Gastrocnemius medialis (tissue), 4 donors: ENCODE measurements at regions of chr10 and their contacts with region 1.

Region 1: DNA sequence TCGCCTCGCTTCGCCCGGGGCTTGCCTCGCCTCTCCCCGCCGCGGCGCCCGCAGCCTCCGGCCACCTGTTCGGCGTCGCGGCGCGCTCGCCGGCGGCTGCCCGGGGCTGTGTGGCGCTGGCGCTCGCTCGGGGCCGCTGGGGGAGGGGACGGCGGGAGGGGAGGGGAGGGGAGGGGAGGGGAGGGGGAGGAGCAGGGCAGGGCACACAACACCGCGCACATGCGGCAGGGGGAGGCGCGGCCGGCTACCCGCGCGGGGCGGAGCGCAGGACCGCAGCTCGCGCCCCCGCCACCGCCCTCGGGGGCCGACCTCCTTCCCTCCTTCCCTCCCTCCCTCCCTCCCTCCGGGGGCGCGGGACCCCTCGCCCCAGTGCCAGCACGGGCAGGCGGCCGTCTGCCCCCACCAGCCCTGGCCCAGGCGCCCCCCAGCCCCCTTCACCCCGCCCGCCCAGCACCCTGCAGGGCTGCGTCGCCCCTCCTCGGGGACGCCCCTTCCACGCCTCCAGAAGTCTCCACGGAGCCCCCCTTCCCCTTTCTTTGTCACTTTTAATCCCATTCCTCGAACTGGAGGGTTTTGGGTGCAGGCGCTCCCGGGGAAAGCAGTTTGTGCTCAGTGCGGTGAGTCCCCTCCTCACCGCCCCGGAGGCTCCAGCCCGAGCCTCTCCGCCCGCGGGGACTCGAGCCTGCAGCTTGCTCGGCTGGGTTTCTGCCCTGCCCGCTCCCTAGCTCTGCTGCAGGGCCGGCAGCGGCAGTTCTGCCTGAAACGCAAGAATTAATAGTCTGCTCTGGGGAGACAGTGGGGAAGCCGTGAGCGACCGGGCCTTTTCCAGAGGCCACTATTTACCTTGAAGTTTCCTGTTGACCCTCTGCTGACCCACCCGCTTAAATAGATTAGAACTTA is at the start of gene PARD3:
- DNase-seq: peak; percentile 67 to 69
- ATAC-seq: peak; percentile 64 to 71
- H3K4me3 ChIP-seq: peak within 1 kb of the TSS; percentile 76 to 91 (median 86)
- H3K27ac ChIP-seq: peak within 1 kb of the TSS; percentile 79 to 92 (median 88)
- H3K4me1 ChIP-seq: peaks cover 29 to 35% of the 10 kb centered on the region in 2 donors
- H3K27me3 ChIP-seq: no peaks in the 10 kb centered on the region
- CTCF ChIP-seq: no peak
- POLR2A ChIP-seq: peak; percentile 63 to 68
- total RNA-seq, gene PARD3: 64.6 to 75.8 (median 68.3) TPM

Region 2: DNA sequence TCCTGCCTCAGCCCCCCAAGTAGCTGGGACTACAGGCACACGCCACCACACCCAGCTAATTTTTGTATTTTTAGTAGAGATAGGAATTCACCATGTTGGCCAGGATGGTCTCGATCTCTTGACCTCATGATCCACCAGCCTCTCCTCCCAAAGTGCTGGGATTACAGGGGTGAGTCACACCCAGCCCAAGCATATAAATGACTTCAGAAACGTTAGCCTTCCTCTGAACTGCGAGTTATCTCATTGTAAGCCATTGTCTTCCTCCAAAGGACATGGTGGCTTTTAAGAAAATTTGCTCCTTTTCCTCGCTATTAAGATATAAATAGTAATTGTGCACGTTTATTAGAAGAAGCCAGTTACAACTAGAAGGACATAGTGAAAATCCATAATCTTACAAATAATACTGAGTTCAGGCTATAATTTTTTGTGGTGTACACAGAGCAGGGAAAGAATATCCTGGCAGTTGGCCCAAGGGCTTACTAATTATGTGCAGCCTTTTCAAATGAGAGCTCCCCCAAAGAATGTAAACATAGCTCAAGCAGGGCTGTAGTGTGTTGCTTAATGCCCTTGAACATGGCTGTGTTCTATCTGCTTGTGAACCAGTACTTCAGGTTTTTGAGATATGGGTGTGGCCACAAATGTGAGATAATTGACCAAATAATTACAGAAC is 496.1 kb before region 1 on chr10:
- in situ Hi-C with region 1: no loop called
- intact Hi-C with region 1: no loop called
- DNase-seq: no peak
- ATAC-seq: no peak
- H3K4me3 ChIP-seq: no peak overlapping the region
- H3K27ac ChIP-seq: no peak overlapping the region
- H3K4me1 ChIP-seq: peaks cover 11 to 13% of the 10 kb centered on the region in 2 donors
- H3K27me3 ChIP-seq: no peaks in the 10 kb centered on the region
- CTCF ChIP-seq: no peak
- POLR2A ChIP-seq: no peak

Region 3: GRCh38 chr10:34666008-34666705 is 149.3 kb before region 1 on chr10:
- in situ Hi-C with region 1: loop called in 2 of 4 experiments (anchors 25 kb)
- intact Hi-C with region 1: loop called (anchors 5 kb)
- DNase-seq: peak; percentile 39 to 59
- ATAC-seq: peak; percentile 86 to 95
- H3K4me3 ChIP-seq: no peak overlapping the region
- H3K27ac ChIP-seq: no peak overlapping the region
- H3K4me1 ChIP-seq: peaks cover 8 to 15% of the 10 kb centered on the region in 2 donors
- H3K27me3 ChIP-seq: no peaks in the 10 kb centered on the region
- CTCF ChIP-seq: peak; percentile 25 to 68 (median 45)
- POLR2A ChIP-seq: no peak

Region 4: GRCh38 chr10:34739915-34740314 is 75.5 kb before region 1 on chr10:
- in situ Hi-C with region 1: no loop called
- intact Hi-C with region 1: loop called (anchors 1 kb)
- DNase-seq: peak; percentile 79 to 86
- ATAC-seq: peak; percentile 87 to 95
- H3K4me3 ChIP-seq: peak overlapping the region; percentile 1 to 34 (median 22)
- H3K27ac ChIP-seq: peak overlapping the region; percentile 71 to 88 (median 75)
- H3K4me1 ChIP-seq: peaks cover 42 to 67% of the 10 kb centered on the region in 2 donors
- H3K27me3 ChIP-seq: no peaks in the 10 kb centered on the region
- CTCF ChIP-seq: no peak
- POLR2A ChIP-seq: peak in 1 of 2 donors; percentile 62

Region 5: GRCh38 chr10:34753014-34753757 is 62.2 kb before region 1 on chr10:
- in situ Hi-C with region 1: no loop called
- intact Hi-C with region 1: no loop called
- DNase-seq: no peak
- ATAC-seq: no peak
- H3K4me3 ChIP-seq: no peak overlapping the region
- H3K27ac ChIP-seq: peak overlapping the region in 1 of 4 donors; percentile 7
- H3K4me1 ChIP-seq: peaks cover 34 to 39% of the 10 kb centered on the region in 2 donors
- H3K27me3 ChIP-seq: no peaks in the 10 kb centered on the region
- CTCF ChIP-seq: no peak
- POLR2A ChIP-seq: no peak

Region 6: GRCh38 chr10:34773636-34774630 is 41.5 kb before region 1 on chr10:
- in situ Hi-C with region 1: no loop called
- intact Hi-C with region 1: loop called (anchors 5 kb)
- DNase-seq: no peak
- ATAC-seq: no peak
- H3K4me3 ChIP-seq: no peak overlapping the region
- H3K27ac ChIP-seq: no peak overlapping the region
- H3K4me1 ChIP-seq: peaks cover 56 to 62% of the 10 kb centered on the region in 2 donors
- H3K27me3 ChIP-seq: no peaks in the 10 kb centered on the region
- CTCF ChIP-seq: no peak
- POLR2A ChIP-seq: no peak

Region 7: DNA sequence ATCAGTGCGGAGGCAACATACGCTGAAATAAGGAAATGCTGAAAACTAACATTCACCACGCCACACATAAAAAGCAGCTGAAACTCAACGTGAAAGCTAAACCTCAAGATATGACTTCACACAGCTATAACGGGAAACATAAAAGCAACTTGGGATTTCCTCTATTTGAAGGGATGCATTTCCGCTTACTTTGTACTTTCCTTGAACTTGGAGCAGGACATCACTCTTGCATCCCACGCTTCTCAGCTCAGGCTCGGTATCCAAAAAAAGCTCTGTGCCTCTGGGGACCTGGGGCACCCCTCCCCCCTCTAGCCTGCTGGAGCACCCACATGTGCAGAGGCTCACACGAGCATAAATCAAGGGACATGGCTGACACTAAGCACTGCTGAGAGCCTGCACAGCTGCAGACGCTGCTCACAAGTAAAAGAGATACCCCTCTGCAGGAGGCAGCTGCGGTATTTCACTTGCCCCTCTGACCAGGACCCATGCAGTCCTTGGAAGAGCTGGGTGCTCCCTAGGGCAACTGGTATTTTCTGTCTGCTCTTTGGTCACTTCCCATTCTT is 34.5 kb before region 1 on chr10:
- in situ Hi-C with region 1: no loop called
- intact Hi-C with region 1: loop called (anchors 2 kb)
- DNase-seq: peak; percentile 59 to 78
- ATAC-seq: peak; percentile 83 to 90
- H3K4me3 ChIP-seq: peak overlapping the region in 2 of 4 donors; percentile 13 to 22
- H3K27ac ChIP-seq: peak overlapping the region; percentile 39 to 74 (median 58)
- H3K4me1 ChIP-seq: peaks cover 43 to 67% of the 10 kb centered on the region in 2 donors
- H3K27me3 ChIP-seq: no peaks in the 10 kb centered on the region
- CTCF ChIP-seq: no peak
- POLR2A ChIP-seq: no peak

Region 8: DNA sequence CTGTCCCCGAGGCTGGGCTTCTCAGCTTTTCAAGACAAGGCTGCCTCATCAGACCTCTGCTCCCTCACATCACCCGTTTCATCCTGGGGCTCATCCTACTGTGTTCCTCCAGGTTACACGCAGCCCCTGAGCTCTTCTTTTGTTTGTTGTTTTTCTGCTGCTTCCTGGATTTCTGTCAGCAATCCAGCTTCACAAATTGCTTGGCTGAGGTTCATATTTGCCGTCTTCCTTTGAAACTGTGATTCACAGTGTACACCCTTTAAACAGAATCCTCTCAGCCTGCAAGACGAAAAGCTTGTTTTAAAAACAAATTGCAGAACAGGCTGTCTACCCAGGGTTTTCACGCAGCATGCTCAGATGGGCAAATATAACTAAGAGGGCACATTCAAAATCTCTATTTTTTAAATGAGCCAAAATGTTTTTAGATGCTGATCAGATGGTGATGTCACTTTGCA is 38.7 kb after region 1 on chr10:
- in situ Hi-C with region 1: no loop called
- intact Hi-C with region 1: no loop called
- DNase-seq: no peak
- ATAC-seq: no peak
- H3K4me3 ChIP-seq: no peak overlapping the region
- H3K27ac ChIP-seq: no peak overlapping the region
- H3K4me1 ChIP-seq: no peaks in the 10 kb centered on the region
- H3K27me3 ChIP-seq: no peaks in the 10 kb centered on the region
- CTCF ChIP-seq: no peak
- POLR2A ChIP-seq: no peak